Common myeloid progenitor, CD34-positive (primary cell): ENCODE measurements at regions of chr16 and their contacts with region 1.

Region 1: GRCh38 chr16:4550591-4550990 is 5.5 kb upstream of the C16orf96 start:
- DNase-seq: no peak
- H3K4me3 ChIP-seq: no peak overlapping the region
- H3K27ac ChIP-seq: no peak overlapping the region
- H3K4me1 ChIP-seq: peaks cover 0 to 4% (median 1%) of the 10 kb centered on the region in 4 experiments
- H3K27me3 ChIP-seq: no peaks in the 10 kb centered on the region

Region 2: GRCh38 chr16:4517812-4518680 is 32.5 kb before region 1 on chr16:
- CTCF ChIA-PET with region 1: interaction called, 375 read pairs
- POLR2A ChIA-PET with region 1: no interaction called
- DNase-seq: peak in 2 of 3 donors; percentile 25 to 34
- H3K4me3 ChIP-seq: no peak overlapping the region
- H3K27ac ChIP-seq: no peak overlapping the region
- H3K4me1 ChIP-seq: peaks cover 17 to 74% (median 52%) of the 10 kb centered on the region in 4 experiments
- H3K27me3 ChIP-seq: no peaks in the 10 kb centered on the region

Region 3: GRCh38 chr16:4538350-4539235 is 12.0 kb before region 1 on chr16 and contains the start of gene CDIP1:
- CTCF ChIA-PET with region 1: interaction called, 11 read pairs
- POLR2A ChIA-PET with region 1: no interaction called
- DNase-seq: peak; percentile 96 to 97 (median 97)
- H3K4me3 ChIP-seq: peak within 1 kb of the TSS; percentile 52 to 84 (median 70)
- H3K27ac ChIP-seq: peak within 1 kb of the TSS in 1 of 2 experiments; percentile 58
- H3K4me1 ChIP-seq: peaks cover 0 to 20% (median 16%) of the 10 kb centered on the region in 4 experiments
- H3K27me3 ChIP-seq: no peaks in the 10 kb centered on the region

Region 4: DNA sequence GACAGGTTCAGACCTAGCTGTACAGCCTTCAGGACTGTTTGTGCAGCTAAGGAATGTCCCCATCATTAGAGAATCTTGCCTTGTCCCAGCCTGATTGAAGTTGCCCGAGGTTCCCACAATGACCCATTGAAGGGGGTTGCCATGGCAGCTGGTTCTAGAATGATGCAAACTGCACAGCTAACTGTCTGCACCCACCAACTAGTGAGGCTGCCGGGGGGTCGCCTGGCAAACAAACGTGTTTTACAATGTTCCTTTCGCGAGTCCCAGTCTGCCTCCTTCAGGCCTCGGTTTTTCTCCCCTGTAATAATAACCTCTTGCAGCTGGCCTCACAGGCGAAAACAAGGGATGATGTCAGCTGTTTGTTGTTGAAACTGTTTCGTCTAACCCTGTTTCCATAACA is 11.0 kb after region 1 on chr16:
- CTCF ChIA-PET with region 1: interaction called, 23 read pairs
- POLR2A ChIA-PET with region 1: no interaction called
- DNase-seq: no peak
- H3K4me3 ChIP-seq: no peak overlapping the region
- H3K27ac ChIP-seq: no peak overlapping the region
- H3K4me1 ChIP-seq: no peaks in the 10 kb centered on the region
- H3K27me3 ChIP-seq: no peaks in the 10 kb centered on the region

Region 5: DNA sequence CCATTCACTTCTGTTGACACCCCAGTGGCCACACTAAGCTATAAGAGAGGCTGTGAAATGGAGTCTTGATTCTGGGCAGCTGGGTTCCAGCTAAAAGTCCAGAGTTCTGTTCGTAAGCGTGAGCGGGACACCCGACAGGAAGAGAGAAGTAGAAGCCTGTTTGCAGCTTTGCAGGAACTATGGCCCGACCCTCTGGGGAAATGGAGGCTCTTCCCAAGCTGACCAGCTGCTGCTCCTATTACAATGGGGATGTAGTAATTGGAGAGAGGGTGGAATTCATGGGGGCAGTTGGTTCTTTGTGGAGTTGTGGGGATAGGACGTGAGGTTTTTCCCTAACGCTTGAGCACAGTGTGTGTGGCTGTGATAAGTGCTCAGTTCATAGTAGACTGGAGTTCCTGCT is 35.7 kb after region 1 on chr16:
- CTCF ChIA-PET with region 1: interaction called, 11 read pairs
- POLR2A ChIA-PET with region 1: no interaction called
- DNase-seq: no peak
- H3K4me3 ChIP-seq: no peak overlapping the region
- H3K27ac ChIP-seq: no peak overlapping the region
- H3K4me1 ChIP-seq: peaks cover 0 to 2% (median 0%) of the 10 kb centered on the region in 4 experiments
- H3K27me3 ChIP-seq: peaks cover 0 to 11% (median 0%) of the 10 kb centered on the region in 5 experiments

Region 6: DNA sequence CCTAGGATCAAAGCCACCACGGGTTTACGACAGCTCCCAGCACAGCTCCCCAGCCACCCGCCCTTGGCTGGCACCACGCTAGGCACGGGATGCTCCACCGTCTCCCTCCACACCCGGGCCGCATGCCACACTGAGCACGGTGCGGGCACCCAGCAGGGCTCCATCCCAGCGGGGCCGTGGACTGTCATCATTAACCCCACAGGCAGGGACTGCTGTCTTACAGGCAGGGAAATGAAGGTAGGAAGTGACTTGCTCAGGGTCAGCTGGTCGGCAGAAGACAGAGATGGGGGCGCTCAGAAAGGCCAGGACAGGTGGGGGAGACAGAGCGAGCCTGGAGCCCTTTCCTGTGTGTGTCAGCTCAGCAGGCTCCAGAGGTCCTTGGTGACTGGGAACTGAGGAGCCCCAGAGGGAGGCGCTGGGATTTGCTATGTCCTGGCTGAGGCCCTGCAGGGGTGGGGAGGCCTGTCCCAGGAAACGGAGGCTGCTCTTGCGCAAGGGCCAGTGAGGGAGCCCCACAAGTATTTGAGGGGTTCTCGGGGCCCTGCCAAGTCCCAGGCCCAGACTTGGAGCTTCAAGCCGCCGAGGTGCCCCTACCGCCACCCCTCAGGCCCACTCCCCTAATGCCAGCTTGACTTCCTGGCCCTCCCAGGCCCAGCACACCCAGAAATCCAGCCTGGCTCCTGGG is 60.9 kb after region 1 on chr16:
- CTCF ChIA-PET with region 1: no interaction called
- POLR2A ChIA-PET with region 1: no interaction called
- DNase-seq: no peak
- H3K4me3 ChIP-seq: no peak overlapping the region
- H3K27ac ChIP-seq: no peak overlapping the region
- H3K4me1 ChIP-seq: peaks cover 2 to 45% (median 31%) of the 10 kb centered on the region in 4 experiments
- H3K27me3 ChIP-seq: no peaks in the 10 kb centered on the region